Calu3 (cell line): ENCODE measurements at regions of chr7 and their contacts with region 1.

Region 1: DNA sequence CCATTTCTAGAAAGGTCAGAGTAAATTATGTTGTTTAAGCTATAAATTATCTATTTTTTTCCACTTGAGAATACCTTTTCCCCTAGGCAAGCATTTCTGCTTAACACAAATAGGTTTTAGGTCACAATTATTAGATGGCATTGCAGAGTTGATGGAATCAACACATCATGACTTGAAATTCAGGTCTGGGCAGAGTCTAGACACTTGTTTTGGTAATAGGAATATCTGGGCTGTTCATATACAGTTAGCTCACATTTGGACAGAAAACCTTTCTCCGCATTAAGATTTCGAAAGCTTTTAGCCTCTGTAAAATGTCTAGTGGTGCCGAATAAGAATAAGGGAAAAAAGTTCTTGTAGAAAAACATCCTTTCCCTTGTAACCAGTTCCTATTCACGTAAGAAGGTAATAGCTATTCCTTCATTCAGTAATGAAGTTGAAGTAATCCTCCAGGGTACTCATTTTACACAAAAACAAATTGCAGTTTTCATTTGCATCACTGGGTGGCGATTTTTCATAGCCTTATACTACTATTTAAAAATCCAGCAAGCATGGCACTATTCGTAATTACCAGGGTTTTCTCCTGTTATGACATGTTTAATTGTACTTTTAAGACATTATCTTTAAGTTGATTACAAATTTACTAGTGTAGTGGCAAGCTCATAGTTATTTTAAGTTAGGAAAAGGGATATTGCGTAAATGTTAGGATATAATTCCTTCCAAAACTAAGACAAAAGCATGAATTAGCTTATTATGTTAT is 37.0 kb downstream of the RPA3 start:
- DNase-seq: peak; percentile 66
- H3K4me3 Mint-ChIP-seq: no peak overlapping the region
- H3K27ac Mint-ChIP-seq: no peak overlapping the region
- H3K4me1 Mint-ChIP-seq: peaks cover 22% of the 10 kb centered on the region
- H3K27me3 Mint-ChIP-seq: no peaks in the 10 kb centered on the region
- CTCF ChIP-seq: peak; percentile 58

Region 2: DNA sequence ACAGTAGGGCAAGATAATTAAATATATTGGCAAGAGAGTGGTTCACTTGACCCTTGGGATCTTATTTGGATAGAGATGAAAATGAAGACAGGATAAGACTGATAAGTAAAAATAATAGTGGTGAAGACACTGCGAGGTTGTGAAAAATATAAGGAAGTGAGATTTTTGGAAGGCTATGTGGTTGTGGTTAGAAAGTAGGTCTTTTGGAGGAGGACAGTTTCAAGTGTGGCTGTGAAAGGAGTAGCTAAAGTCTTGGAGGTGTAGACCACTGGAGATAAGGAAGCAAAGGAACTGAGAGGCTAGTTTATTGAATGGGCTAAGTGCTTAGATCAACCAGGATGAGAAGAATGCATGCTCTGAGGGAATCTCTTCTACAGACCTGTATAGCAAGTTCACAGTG is 103.5 kb before region 1 on chr7:
- CTCF ChIA-PET with region 1: no interaction called
- intact Hi-C with region 1: no loop called
- DNase-seq: no peak
- H3K4me3 Mint-ChIP-seq: no peak overlapping the region
- H3K27ac Mint-ChIP-seq: no peak overlapping the region
- H3K4me1 Mint-ChIP-seq: no peaks in the 10 kb centered on the region
- H3K27me3 Mint-ChIP-seq: no peaks in the 10 kb centered on the region
- CTCF ChIP-seq: no peak

Region 3: DNA sequence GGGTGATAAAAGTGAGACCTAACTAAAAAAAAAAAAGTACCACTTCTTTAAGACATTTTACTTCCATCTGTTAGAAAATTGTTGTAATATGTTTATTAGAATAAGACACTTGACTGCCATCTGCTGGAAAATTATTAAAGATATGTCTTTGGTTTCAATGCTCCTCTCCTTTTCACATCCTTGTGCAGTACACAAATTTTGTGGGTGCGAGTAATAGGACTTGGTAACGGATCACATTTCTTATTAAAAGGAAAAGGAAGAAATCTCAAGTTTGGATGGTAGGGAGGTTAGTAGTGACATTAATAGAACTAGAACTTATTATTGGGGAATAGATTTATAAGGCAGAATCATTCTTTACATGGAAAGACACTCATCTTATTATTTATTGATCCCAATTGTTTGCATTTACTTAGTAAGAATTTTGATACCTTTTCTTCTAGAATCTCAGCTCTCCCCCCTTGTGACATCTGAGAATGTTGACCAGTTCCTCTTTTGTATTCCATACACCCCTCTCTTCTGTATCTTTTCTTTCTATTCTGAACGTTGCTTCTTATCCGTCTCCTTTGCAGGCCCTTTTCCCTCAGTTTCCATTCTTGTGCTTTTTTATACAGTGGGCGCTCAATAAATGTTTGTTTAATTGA is 80.1 kb after region 1 on chr7:
- CTCF ChIA-PET with region 1: interaction called, 20 read pairs
- intact Hi-C with region 1: loop called (anchors 1 kb)
- DNase-seq: no peak
- H3K4me3 Mint-ChIP-seq: peak overlapping the region; percentile 66
- H3K27ac Mint-ChIP-seq: peak overlapping the region; percentile 5
- H3K4me1 Mint-ChIP-seq: peaks cover 39% of the 10 kb centered on the region
- H3K27me3 Mint-ChIP-seq: no peaks in the 10 kb centered on the region
- CTCF ChIP-seq: no peak

Region 4: DNA sequence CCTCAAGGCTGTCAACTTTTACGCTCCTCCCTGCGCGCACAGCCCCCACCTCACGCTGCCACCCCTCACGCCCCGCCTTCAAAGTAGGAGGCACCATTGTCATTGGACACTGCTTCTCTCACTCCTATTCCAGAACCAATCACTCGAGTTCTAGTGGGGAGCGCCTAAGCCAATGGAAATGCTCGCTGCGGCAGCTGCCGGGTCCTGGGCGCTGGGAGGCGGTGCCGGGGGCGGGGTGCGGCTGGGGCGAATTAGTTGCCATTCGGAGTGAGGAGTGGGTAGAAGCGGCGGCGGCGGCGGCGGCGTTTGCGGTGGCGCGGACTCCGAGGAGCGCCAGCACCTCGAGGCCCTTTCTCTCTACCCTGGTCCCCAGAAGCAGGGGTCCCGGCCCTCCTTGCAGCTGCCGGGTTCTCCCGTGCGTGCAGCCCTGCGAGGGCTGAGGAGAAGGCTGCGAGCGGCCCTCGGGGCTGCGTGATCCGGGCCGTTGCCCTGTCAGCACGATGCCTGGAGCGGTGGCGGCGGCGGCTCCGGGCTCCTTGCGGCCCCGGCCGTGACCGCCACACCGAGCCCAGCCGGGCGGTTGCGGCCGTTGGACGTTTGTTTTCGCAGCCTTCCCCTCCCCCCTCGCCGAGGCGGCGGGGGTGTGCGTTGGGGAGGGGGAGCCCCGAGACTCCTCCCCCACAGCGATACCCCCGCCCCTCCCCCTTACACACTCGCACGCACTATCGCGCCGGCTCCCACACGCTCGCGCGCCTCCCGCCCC is 287.4 kb after region 1 on chr7 and contains the start of gene GLCCI1:
- CTCF ChIA-PET with region 1: interaction called, 10 read pairs
- intact Hi-C with region 1: loop called (anchors 2 kb)
- DNase-seq: peak; percentile 99
- H3K4me3 Mint-ChIP-seq: no peak within 1 kb of the TSS
- H3K27ac Mint-ChIP-seq: peak within 1 kb of the TSS; percentile 52
- H3K4me1 Mint-ChIP-seq: no peaks in the 10 kb centered on the region
- H3K27me3 Mint-ChIP-seq: no peaks in the 10 kb centered on the region
- CTCF ChIP-seq: no peak
- total RNA-seq, gene GLCCI1: 10.1 and 12.9 TPM in 2 replicates

Region 5: DNA sequence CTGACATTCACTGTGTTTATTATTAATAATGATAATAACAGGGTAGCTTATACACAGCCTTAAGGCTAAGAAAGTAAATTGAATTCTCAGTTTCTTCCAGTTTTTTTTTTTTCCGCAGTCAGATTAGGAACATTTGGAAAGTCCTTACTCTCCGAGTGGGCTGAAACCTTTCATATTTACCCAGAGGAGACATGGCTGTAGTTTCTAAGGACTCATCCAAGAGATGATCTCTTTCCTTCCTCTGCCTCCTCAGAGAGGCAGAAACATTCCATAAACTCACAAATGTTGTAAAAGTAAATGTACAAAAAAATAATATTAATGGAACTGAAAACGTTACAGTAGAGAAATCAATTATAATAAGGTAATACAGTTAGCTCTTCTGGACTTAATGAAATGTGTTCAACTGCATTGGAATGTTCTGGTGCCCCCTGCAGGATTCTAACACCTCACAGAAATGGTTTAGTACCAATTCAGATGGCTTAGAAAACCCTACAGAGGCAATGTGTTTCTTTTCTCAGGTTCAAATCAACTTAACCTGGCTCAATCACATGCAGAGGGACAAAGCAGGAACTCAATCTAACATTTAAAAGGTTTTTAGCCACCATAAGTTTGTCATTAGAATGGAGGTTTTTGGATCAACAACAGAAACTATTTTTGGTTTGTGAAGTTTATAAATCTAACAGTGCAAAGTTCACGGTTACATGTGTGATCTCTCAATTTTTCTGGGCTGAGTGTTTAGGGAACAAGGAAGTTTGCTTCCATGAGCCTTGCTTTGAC is 508.9 kb after region 1 on chr7:
- CTCF ChIA-PET with region 1: interaction called, 12 read pairs
- intact Hi-C with region 1: no loop called
- DNase-seq: peak; percentile 62
- H3K4me3 Mint-ChIP-seq: no peak overlapping the region
- H3K27ac Mint-ChIP-seq: no peak overlapping the region
- H3K4me1 Mint-ChIP-seq: no peaks in the 10 kb centered on the region
- H3K27me3 Mint-ChIP-seq: no peaks in the 10 kb centered on the region
- CTCF ChIP-seq: peak; percentile 57

Region 6: DNA sequence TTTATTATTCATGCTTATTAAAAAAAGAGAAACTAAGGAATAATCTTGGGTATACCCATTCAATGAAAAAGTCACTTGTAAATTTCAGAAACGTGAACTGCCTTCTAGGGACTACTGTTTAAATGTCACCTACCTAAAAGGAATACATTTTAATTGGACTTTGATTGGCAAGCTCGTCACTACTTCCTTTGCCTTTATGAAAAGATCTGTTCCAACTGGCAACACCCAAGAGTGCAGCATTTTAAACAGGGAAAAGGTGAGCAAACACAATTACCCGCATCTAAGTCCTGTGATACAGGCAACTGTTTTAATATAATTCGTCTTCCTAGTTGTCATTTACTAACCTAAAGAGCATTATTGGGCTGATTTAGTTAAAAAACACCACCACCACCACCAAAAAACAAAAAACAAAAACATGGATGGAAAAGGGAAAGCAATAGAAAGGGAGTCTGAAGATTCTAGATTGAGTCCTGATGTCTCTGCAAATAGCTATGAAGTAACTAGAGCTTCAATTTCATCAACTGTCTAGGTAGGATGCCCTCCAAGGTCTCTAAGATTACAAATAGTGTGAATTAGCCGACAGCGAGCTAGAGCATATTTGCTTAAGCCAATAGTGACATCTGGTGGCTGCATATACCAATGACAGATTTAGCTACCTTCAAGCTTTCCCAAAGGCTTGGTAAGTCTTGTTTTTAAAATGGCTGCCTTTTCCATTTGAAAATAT is 614.4 kb after region 1 on chr7:
- CTCF ChIA-PET with region 1: interaction called, 21 read pairs
- intact Hi-C with region 1: loop called (anchors 1 kb)
- DNase-seq: peak; percentile 69
- H3K4me3 Mint-ChIP-seq: no peak overlapping the region
- H3K27ac Mint-ChIP-seq: no peak overlapping the region
- H3K4me1 Mint-ChIP-seq: peaks cover 27% of the 10 kb centered on the region
- H3K27me3 Mint-ChIP-seq: no peaks in the 10 kb centered on the region
- CTCF ChIP-seq: peak; percentile 84